WTC11 (cell line): ENCODE measurements at regions of chr22 and their contacts with region 1.

Region 1: DNA sequence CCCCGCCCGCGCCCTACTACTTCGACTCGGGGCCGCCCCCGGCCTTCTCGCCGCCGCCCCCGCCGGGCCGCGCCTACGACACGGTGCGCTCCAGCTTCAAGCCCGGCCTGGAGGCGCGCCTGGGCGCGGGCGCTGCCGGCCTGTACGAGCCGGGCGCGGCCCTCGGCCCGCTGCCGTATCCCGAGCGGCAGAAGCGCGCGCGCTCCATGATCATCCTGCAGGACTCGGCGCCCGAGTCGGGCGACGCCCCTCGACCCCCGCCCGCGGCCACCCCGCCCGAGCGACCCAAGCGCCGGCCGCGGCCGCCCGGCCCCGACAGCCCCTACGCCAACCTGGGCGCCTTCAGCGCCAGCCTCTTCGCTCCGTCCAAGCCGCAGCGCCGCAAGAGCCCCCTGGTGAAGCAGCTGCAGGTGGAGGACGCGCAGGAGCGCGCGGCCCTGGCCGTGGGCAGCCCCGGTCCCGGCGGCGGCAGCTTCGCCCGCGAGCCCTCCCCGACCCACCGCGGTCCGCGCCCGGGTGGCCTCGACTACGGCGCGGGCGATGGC is 17.6 kb upstream of the ACR start:
- DNase-seq: no peak
- ATAC-seq: peak; percentile 53
- H3K4me3 Mint-ChIP-seq: no peak overlapping the region
- H3K27ac Mint-ChIP-seq: no peak overlapping the region
- H3K4me1 Mint-ChIP-seq: peaks cover 4% of the 10 kb centered on the region
- H3K27me3 Mint-ChIP-seq: peaks cover 68% of the 10 kb centered on the region
- CTCF ChIP-seq: no peak

Region 2: GRCh38 chr22:50684986-50685385 is 35.4 kb before region 1 on chr22:
- CTCF ChIA-PET with region 1: no interaction called
- POLR2A ChIA-PET with region 1: no interaction called
- DNase-seq: no peak
- ATAC-seq: no peak
- H3K4me3 Mint-ChIP-seq: no peak overlapping the region
- H3K27ac Mint-ChIP-seq: 0 out of 2 replicates have a peak overlapping the region, but pooled peaks have one; percentile 37
- H3K4me1 Mint-ChIP-seq: no peaks in the 10 kb centered on the region
- H3K27me3 Mint-ChIP-seq: peaks cover 4% of the 10 kb centered on the region
- CTCF ChIP-seq: no peak

Region 3: GRCh38 chr22:50731811-50732624 is 11.6 kb after region 1 on chr22:
- CTCF ChIA-PET with region 1: interaction called, 11 read pairs
- POLR2A ChIA-PET with region 1: interaction called, 3 read pairs
- DNase-seq: peak; percentile 49
- ATAC-seq: peak; percentile 74
- H3K4me3 Mint-ChIP-seq: no peak overlapping the region; the same call in 1 of the 2 replicates
- H3K27ac Mint-ChIP-seq: no peak overlapping the region
- H3K4me1 Mint-ChIP-seq: peaks cover 3% of the 10 kb centered on the region; the same call in 1 of the 2 replicates
- H3K27me3 Mint-ChIP-seq: peaks cover 61% of the 10 kb centered on the region
- CTCF ChIP-seq: peak; percentile 62